GM10248 (cell line): ENCODE measurements at regions of chr1 and their contacts with region 1.

Region 1: DNA sequence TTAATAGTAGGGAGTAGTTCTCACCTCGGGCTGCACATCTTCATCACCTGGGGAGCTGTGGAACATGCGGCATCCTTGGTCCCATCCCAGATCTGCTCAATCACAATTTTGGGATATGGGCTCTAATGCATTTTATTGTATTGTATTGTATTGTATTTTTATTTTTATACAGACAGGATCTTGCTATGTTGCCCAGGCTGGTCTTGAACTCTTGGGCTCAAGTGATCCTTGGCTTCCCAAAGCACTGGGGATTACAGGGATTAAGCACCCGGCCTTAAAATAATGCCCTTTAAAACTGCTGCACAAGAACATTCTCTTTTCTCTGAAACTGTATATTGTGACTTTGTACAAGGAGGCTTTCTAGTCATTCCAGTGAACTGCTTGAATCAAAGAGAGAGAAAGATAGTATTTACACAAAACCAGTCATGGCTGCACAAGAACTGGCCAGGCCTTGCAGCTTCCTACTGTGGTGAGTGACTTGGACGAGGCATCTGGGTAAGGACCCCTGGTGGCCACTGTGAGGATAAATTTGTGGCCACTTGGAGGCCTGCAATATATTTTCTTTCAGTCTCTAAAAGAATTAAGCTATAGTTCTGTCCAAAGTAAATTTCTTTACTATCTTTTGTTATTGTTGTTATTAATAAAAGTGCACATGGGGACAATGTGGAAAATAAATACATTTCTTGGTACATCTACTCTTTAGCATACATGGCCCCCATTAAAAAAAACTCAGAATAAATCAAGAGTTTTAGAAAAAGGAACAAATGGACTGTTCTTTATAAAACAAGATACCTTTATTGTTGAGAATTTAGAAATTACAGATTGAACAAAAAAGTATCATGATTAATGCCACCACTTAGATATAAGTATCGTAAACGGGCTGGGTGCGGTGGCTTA is 48.0 kb downstream of the TBCE start:
- DNase-seq: peak; percentile 73
- CTCF ChIP-seq: peak; percentile 65

Region 2: GRCh38 chr1:235060607-235061470 is 354.4 kb before region 1 on chr1:
- CTCF ChIA-PET with region 1: no interaction called
- POLR2A ChIA-PET with region 1: no interaction called
- DNase-seq: no peak
- CTCF ChIP-seq: no peak

Region 3: GRCh38 chr1:235093696-235094592 is 321.3 kb before region 1 on chr1:
- CTCF ChIA-PET with region 1: interaction called, 54 read pairs
- POLR2A ChIA-PET with region 1: no interaction called
- DNase-seq: peak; percentile 84
- CTCF ChIP-seq: peak; percentile 92

Region 4: GRCh38 chr1:235240960-235241359 is 174.3 kb before region 1 on chr1:
- CTCF ChIA-PET with region 1: interaction called, 17 read pairs
- POLR2A ChIA-PET with region 1: no interaction called
- DNase-seq: no peak
- CTCF ChIP-seq: no peak

Region 5: DNA sequence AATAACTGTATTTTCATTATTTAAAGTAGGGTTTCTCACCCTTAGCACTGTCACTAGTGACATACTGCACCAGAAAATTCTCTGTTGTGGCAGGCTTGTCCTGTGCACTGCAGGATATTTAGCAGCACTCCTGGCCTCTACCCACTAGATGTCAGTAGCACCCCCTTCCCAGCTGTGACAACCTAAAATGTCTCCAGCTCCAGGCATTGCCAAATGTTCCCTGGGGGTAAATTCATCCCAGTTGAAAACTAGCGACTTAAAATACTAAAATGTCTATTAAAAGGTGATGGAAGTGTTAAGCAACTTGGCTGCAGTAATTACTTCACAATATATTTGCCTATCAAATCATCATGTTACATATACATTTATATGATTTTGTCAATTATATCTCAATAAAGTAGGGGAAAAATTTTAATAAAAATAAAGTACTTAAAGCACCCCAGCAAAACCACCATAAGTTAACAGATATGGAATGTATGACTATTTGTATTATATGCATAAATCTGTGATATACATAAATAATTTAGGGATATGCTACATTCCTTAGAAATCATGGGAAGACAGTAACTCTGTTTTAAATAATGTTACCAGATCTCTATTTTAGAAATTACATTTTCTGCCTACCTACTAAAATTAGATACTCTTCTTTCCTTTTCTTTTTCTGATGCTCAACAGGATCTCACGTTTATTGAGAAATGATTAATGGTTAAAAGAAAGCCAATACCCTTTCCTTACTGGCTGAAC is 161.9 kb before region 1 on chr1:
- CTCF ChIA-PET with region 1: interaction called, 50 read pairs
- POLR2A ChIA-PET with region 1: no interaction called
- DNase-seq: peak; percentile 34
- CTCF ChIP-seq: peak; percentile 85

Region 6: DNA sequence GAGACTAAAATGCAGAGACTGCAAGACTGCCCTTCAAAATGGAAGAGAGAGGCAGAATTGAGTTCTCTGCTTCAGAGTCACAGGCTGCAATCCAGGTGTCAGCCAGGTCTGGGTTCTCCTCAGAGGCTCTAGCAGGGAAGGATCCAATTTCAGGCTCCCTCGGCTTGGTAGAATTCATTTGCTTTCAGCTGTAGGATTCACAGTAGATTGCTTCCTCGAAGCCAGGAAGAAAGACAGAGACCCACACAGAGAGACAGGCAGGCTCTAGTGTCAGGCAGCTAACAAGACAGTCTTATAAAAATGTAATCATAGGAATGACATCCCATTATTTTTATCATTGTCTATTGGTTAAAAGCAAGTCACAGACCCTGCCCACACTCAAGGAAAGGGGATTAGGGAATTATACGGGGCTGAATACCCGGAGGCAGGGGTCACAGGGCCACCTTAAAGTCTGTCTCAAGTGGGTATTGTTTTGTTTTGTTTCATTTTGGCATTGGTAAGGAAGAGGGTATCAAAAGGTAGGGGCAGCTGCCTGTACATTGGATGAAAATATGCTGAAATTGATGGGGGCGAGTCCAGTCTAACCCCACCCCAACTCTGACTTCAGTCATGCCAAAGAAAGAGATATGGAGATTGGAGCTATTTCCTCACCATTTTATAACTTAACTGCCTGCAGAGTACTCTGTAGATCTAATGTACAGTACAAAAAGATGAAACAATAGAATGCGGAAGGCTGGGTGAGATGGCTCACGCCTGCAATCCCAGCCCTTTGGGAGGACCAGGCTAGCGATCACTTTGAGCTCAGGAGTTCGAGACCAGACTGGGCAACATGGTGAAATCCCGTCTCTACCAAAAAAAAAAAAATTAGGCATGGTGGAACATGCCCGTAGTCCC is 57.5 kb before region 1 on chr1:
- CTCF ChIA-PET with region 1: interaction called, 11 read pairs
- POLR2A ChIA-PET with region 1: no interaction called
- DNase-seq: no peak
- CTCF ChIP-seq: no peak

Region 7: DNA sequence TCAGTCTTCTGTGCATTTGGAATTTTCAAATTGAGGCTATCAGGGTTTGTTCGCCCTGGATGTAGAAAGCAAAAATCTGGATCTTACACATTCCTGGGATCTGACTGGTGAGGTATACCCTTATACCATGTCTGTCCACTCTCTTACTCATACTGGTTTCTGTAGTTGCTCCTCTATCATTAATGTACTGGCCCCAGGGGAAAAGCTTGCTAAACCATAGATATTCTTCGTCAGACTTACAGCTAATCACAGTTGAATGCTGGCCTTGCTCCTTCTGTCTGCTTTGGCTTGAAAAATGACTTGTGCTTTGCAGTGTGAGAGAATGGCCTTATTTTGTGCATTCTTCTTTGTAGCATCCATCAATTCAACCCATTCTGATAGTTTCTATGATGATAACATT is 17.5 kb before region 1 on chr1:
- CTCF ChIA-PET with region 1: interaction called, 45 read pairs
- POLR2A ChIA-PET with region 1: no interaction called
- DNase-seq: no peak
- CTCF ChIP-seq: no peak

Region 8: GRCh38 chr1:235429143-235429542 is 13.9 kb after region 1 on chr1:
- CTCF ChIA-PET with region 1: interaction called, 27 read pairs
- POLR2A ChIA-PET with region 1: no interaction called
- DNase-seq: no peak
- CTCF ChIP-seq: no peak